ENCODE measurements at regions of chr3 and their contacts with region 1.

Region 1: GRCh38 chr3:61530355-61530754 is 31.0 kb upstream of the PTPRG start:
- DNase-seq: peak; percentile 27

Region 2: GRCh38 chr3:61545716-61546115 is 15.4 kb after region 1 on chr3:
- CTCF ChIA-PET with region 1: interaction called, 13 read pairs
- POLR2A ChIA-PET with region 1: no interaction called
- DNase-seq: no peak